ENCODE measurements at regions of chr6 and their contacts with region 1.

Region 1: GRCh38 chr6:34196126-34196830 is 40.4 kb upstream of the HMGA1 start:
- DNase-seq: peak; percentile 74 to 94 (median 84)
- H3K4me3 ChIP-seq: peak overlapping the region; percentile 16 to 67 (median 51)
- H3K27ac ChIP-seq: no peak overlapping the region
- H3K4me1 ChIP-seq: peaks cover 0 to 8% (median 0%) of the 10 kb centered on the region in 3 donors
- H3K27me3 ChIP-seq: no peaks in the 10 kb centered on the region
- CTCF ChIP-seq: peak; percentile 97

Region 2: GRCh38 chr6:34602318-34603111 is 406.2 kb after region 1 on chr6:
- intact Hi-C with region 1: loop called (anchors 10 kb)
- DNase-seq: peak in 1 of 5 donors; percentile 41
- H3K4me3 ChIP-seq: no peak overlapping the region
- H3K27ac ChIP-seq: peak overlapping the region in 1 of 2 donors; percentile 67
- H3K4me1 ChIP-seq: peaks cover 0 to 13% (median 9%) of the 10 kb centered on the region in 3 donors
- H3K27me3 ChIP-seq: no peaks in the 10 kb centered on the region
- CTCF ChIP-seq: no peak

Measured in kidney (tissue), 22 donors.